Activated naive CD4-positive, alpha-beta T cell treated with anti-CD3 and anti-CD28 coated beads, Interleukin-2, amount 10 ng/mL, durations not matched to agents 7 days and 5 days (primary cell): ENCODE measurements at regions of chrX and their contacts with region 1.

Region 1: DNA sequence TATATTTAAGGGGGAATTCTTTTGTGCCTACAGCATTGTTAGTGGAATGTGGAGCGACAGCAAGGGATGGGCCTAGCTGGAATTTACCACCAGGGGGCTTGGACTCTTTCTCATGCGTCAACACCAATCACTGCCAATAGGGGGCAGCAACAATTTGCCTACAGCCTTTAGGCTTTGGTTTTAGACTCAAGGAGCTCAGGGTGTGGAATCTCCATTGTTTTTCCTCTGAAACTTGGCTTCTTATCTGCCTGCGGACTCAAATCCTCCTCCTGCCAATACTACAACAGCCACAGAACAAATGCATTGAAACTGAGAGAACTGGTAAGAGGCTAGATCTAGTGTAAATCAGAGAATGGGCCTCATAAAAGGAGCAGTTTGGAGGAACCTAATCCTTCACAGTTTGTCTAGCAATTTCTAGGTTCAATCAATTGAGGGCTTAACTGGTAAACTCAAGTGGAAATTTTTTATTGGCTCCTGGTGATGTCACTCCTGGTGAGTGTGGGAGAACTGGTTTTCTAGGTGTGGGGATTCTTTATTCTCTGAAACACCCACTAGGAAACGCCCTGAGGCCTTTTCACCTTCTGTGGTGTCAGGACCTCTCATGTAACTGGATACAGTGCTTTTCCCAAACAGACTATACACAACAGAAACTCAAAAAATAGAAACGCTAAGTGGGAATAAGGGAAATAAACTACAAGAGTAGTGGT is 27.9 kb upstream of the TMSB4X start:
- DNase-seq: peak; percentile 79
- H3K4me3 Mint-ChIP-seq: peak overlapping the region; percentile 53
- H3K27ac Mint-ChIP-seq: peak overlapping the region; percentile 89
- H3K4me1 Mint-ChIP-seq: peaks cover 53% of the 10 kb centered on the region
- H3K27me3 Mint-ChIP-seq: peaks cover 2% of the 10 kb centered on the region

Region 2: DNA sequence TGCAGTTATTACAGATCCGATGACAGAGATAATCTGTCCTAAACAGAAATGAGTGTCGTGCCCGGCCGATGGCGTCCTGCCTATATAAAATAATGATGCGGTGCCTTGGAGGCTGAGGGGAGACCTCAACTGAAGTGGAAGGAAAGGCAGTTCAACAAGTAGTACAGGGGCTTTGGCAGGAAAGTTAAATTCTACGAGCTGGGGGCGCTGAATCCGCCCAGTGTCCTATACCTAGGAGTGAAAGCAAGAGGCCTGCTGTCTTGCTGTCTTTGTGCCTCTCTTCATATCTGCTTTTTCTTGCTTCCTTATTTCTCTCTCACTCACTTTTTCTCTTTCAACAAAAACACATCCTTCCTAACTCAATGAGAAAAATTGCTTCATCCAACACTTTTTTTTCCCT is 237.9 kb before region 1 on chrX:
- CTCF ChIA-PET with region 1: no interaction called
- DNase-seq: peak; percentile 45
- H3K4me3 Mint-ChIP-seq: no peak overlapping the region
- H3K27ac Mint-ChIP-seq: no peak overlapping the region
- H3K4me1 Mint-ChIP-seq: no peaks in the 10 kb centered on the region
- H3K27me3 Mint-ChIP-seq: no peaks in the 10 kb centered on the region

Region 3: GRCh38 chrX:12791257-12792228 is 155.4 kb before region 1 on chrX and contains the start of gene PRPS2:
- CTCF ChIA-PET with region 1: no interaction called
- DNase-seq: peak; percentile 85
- H3K4me3 Mint-ChIP-seq: peak within 1 kb of the TSS; percentile 82
- H3K27ac Mint-ChIP-seq: peak within 1 kb of the TSS; percentile 89
- H3K4me1 Mint-ChIP-seq: peaks cover 31% of the 10 kb centered on the region
- H3K27me3 Mint-ChIP-seq: peaks cover 10% of the 10 kb centered on the region

Region 4: GRCh38 chrX:12967711-12968465 is 20.9 kb after region 1 on chrX:
- CTCF ChIA-PET with region 1: interaction called, 22 read pairs
- DNase-seq: peak; percentile 56
- H3K4me3 Mint-ChIP-seq: peak overlapping the region; percentile 71
- H3K27ac Mint-ChIP-seq: peak overlapping the region; percentile 97
- H3K4me1 Mint-ChIP-seq: peaks cover 60% of the 10 kb centered on the region
- H3K27me3 Mint-ChIP-seq: no peaks in the 10 kb centered on the region

Region 5: DNA sequence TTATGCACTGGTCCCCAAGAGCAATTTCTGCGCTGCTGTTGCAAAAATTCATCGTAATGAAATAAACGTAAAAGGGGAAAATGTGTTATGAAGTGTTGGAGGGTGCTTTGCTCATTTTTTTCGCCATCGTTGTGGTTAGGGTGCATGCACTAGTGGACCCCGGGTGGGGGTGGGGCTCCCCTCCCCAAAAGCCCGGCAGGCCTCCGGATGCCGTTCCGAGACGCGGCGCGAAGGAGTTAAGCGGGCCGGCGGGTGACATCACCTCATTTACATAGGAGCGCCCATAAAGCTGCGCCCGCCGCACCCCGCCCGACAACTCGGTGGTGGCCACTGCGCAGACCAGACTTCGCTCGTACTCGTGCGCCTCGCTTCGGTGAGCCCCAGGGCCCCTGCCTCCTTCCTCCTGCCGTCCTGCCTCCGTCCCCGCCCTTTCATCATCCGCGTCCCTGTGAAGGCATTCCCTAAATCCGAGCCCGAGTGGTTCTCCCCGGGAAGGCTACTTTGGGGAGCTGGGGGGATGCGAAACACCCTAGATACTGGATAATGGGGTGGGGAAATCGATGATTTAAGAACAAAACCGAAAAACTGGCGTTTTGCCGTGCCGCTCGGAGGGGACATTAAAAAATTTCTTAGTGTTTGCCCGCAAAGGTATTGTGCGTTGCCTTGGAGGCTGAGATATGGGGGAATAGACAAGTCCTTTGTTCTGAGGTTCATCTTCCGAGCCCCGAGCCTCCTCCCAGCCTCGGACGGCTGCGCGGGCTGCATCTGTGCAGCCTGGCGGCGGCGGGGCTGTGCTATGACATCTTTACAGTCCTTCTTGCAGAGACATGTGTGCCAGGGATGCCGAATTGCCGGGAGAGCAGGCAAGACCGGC is 28.0 kb after region 1 on chrX and contains the start of gene TMSB4X:
- CTCF ChIA-PET with region 1: interaction called, 22 read pairs
- DNase-seq: peak; percentile 89
- H3K4me3 Mint-ChIP-seq: peak within 1 kb of the TSS; percentile 97
- H3K27ac Mint-ChIP-seq: peak within 1 kb of the TSS; percentile 99
- H3K4me1 Mint-ChIP-seq: peaks cover 39% of the 10 kb centered on the region
- H3K27me3 Mint-ChIP-seq: peaks cover 14% of the 10 kb centered on the region

Region 6: DNA sequence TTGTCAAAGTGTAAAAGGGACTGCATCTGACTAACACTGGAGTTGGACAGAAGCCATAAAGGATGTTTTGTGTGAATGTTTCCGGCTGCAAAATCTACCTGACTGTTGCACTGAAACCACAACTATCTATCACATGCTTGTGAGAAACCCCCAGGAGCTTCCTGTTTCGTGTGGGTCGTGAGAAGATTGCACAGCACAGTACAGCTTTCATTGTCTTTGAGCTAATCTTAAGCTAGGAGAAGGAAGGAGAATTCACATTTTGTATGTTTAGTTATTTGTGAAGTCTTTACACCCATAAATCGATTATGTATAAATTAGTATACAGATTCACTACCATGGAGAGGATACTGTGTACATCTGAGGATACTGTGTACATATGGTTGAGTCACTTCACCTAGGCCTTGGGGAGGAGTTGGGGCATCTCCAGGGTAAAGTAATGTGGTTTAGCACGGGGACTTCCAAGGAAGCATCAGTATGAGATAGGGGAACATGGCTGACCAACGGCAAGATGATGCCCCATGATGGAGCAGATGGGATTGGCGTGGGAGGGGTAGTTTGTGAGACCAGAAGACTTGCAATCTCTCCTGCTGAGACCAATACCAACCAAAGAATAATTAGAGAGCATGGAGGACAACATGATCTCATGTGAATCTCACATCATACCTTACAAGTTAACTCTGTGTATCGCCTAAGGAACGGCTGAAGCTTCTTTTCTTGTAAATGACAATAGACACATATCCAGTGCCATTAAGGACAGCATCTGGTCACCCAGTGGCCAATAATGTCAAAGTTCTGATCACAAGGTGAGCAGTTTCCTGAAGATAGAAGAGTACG is 140.5 kb after region 1 on chrX:
- CTCF ChIA-PET with region 1: interaction called, 100 read pairs
- DNase-seq: peak; percentile 72
- H3K4me3 Mint-ChIP-seq: peak overlapping the region; percentile 81
- H3K27ac Mint-ChIP-seq: peak overlapping the region; percentile 97
- H3K4me1 Mint-ChIP-seq: peaks cover 93% of the 10 kb centered on the region
- H3K27me3 Mint-ChIP-seq: no peaks in the 10 kb centered on the region

Region 7: DNA sequence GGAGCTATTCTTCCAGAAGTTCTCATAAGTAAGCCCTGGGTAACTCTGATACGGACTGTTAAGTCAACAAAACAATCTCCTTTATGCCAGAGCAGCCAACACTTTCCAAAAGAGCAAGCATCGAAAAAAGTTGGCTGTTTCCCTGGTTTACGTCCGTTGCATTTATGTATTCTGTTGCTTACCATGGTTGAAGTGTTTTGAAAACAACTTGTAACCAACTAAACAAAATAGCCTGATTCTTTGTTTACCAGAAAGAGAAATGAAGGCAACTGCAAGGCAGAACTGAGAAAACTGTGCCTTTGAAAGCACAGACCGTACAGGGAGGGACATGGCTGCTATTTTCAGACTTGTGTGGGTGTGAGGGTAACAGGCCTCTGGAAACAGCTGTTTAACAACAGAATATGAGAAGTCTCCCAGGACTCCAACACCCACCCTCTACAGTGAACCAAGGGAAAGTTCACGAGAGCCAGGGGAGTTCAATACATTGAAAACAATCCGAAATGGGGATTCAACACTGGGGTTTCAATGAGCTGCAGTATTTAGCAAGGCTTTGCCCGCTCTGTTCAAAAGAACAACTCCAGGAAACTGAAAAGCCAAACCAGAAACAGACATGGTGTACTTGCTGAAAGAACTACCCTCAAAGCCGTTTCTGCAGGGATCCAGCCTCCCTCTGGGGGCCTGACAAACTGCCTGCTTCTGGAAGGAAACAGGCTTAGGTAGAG is 526.6 kb after region 1 on chrX:
- CTCF ChIA-PET with region 1: interaction called, 13 read pairs
- DNase-seq: peak; percentile 29
- H3K4me3 Mint-ChIP-seq: peak overlapping the region; percentile 52
- H3K27ac Mint-ChIP-seq: peak overlapping the region; percentile 92
- H3K4me1 Mint-ChIP-seq: peaks cover 28% of the 10 kb centered on the region
- H3K27me3 Mint-ChIP-seq: no peaks in the 10 kb centered on the region

Region 8: GRCh38 chrX:13487731-13488523 is 540.9 kb after region 1 on chrX:
- CTCF ChIA-PET with region 1: interaction called, 51 read pairs
- DNase-seq: peak; percentile 57
- H3K4me3 Mint-ChIP-seq: no peak overlapping the region
- H3K27ac Mint-ChIP-seq: peak overlapping the region; percentile 81
- H3K4me1 Mint-ChIP-seq: peaks cover 27% of the 10 kb centered on the region
- H3K27me3 Mint-ChIP-seq: peaks cover 4% of the 10 kb centered on the region